ENCODE measurements at regions of chr10 and their contacts with region 1.

Region 1: DNA sequence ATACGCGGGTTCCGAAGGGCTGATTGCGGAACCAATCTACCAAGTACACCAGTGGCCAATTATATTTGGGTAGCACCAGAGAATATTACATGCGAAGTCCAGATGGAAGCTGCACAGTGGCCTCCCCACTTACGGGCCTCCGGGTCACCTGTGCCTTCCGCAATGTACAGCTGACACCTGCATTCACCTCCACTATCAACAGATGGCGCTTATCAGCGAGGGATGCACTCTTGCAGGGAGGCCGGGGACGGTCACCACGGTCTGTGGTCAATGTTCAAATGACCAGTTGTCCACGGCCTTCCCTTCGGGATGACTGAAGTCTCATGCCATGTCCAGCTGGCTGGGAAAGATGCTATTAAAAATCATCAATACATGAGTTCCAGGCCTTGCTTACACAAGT is 47.6 kb downstream of the SLIT1 start:
- DNase-seq: no peak
- H3K4me3 Mint-ChIP-seq: no peak overlapping the region
- H3K27ac Mint-ChIP-seq: no peak overlapping the region
- H3K4me1 Mint-ChIP-seq: no peaks in the 10 kb centered on the region
- H3K27me3 Mint-ChIP-seq: peaks cover 18% of the 10 kb centered on the region

Region 2: DNA sequence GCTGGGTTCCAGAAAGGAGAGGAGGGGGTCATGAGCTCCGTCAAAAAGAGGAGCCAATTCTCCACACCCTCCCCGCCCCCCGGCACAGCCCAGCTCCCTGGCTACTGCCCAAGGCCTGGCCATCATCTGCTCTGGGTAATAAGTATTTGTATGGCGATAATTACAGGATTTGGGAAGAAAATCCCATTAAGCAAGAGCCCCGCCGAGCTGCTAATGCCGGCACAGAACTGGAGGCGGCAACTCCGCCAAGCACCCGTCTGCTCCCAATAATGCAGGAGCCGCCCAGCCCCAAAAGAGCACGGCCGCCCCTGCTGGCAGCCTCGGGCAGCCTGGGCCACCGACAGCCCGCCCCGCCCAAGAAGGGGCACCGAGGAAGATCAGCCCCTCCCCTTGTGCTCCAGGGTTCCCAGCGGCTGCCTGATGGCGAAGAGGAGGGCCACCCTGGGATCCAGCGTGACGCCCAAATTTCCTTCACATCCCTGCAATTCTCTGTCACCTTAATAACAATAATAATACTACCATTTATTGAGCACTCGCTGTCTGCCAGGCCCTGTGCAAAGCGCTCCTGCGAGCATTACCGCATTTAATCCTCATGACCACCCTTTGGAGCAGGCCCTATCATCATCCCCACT is 41.7 kb after region 1 on chr10:
- CTCF ChIA-PET with region 1: no interaction called
- intact Hi-C with region 1: loop called (anchors 5 kb)
- DNase-seq: no peak
- H3K4me3 Mint-ChIP-seq: no peak overlapping the region
- H3K27ac Mint-ChIP-seq: no peak overlapping the region
- H3K4me1 Mint-ChIP-seq: peaks cover 2% of the 10 kb centered on the region
- H3K27me3 Mint-ChIP-seq: peaks cover 39% of the 10 kb centered on the region

Measured in activated naive CD4-positive, alpha-beta T cell treated with anti-CD3 and anti-CD28 coated beads for 36 hours (primary cell).